ENCODE measurements at regions of chr15 and their contacts with region 1.

Region 1: DNA sequence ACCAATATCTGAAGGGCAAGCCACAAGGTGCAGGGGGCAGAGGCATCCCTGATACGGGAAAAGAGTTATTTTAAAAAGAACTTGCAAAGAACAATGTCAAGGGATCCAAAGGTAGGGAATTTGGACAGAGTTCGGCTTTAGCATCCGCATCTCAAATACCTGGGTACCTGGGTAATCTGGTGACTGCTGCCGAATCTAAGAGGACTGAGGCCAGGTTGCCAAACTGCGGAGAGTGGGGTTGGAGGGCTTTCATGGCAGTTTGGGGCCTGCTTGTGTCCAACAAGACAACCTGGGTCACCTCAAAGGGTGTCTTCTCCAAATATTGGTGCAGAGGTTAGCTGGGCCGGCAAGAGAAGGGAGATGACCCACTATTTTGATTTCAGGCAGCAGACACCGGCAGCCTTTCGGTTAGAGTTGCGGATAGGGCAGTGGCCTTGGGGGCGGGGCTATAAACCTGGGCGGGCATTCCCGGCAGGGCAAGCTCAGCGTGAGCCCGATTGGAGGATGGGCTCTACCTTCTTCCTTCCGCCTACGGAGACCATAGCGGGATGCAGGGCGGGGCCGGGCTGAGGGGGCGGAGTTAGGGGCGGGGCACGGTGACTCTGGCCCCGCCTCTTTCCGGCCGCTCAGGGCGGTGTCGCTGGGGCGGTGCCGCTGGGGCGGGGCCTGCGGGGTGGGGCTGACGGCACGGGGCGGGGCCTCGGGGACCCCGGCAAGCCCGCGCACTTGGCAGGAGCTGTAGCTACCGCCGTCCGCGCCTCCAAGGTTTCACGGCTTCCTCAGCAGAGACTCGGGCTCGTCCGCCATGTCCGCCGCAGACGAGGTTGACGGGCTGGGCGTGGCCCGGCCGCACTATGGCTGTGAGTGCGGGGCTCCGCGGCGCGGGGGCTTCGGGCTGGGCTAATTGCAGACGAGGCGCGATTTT is at the start of gene IQGAP1:
- DNase-seq: peak; percentile 97 to 99
- ATAC-seq: peak; percentile 92 to 97 (median 96)
- H3K4me3 ChIP-seq: peak within 1 kb of the TSS; percentile 77
- H3K27ac ChIP-seq: peak within 1 kb of the TSS; percentile 96
- H3K4me1 ChIP-seq: peaks cover 39% of the 10 kb centered on the region
- H3K27me3 ChIP-seq: no peaks in the 10 kb centered on the region
- CTCF ChIP-seq: no peak
- total RNA-seq, gene IQGAP1: 39.7 to 72.2 (median 50.6) TPM

Region 2: GRCh38 chr15:90184786-90185569 is 202.8 kb before region 1 on chr15:
- intact Hi-C with region 1: no loop called
- DNase-seq: peak; percentile 72 to 82
- ATAC-seq: peak; percentile 81 to 89 (median 86)
- H3K4me3 ChIP-seq: peak overlapping the region; percentile 77
- H3K27ac ChIP-seq: peak overlapping the region; percentile 71
- H3K4me1 ChIP-seq: peaks cover 2% of the 10 kb centered on the region
- H3K27me3 ChIP-seq: no peaks in the 10 kb centered on the region
- CTCF ChIP-seq: no peak

Region 3: GRCh38 chr15:90419738-90420406 is 32.1 kb after region 1 on chr15:
- intact Hi-C with region 1: loop called in 1 of 2 experiments (anchors 5 kb)
- DNase-seq: no peak
- ATAC-seq: peak; percentile 76 to 87 (median 85)
- H3K4me3 ChIP-seq: peak overlapping the region; percentile 37
- H3K27ac ChIP-seq: peak overlapping the region; percentile 87
- H3K4me1 ChIP-seq: peaks cover 79% of the 10 kb centered on the region
- H3K27me3 ChIP-seq: no peaks in the 10 kb centered on the region
- CTCF ChIP-seq: no peak

Region 4: GRCh38 chr15:90557186-90558084 is 169.6 kb after region 1 on chr15:
- intact Hi-C with region 1: no loop called
- DNase-seq: peak; percentile 78 to 89
- ATAC-seq: peak; percentile 52 to 71 (median 57)
- H3K4me3 ChIP-seq: no peak overlapping the region
- H3K27ac ChIP-seq: peak overlapping the region; percentile 72
- H3K4me1 ChIP-seq: peaks cover 65% of the 10 kb centered on the region
- H3K27me3 ChIP-seq: no peaks in the 10 kb centered on the region
- CTCF ChIP-seq: no peak